ENCODE measurements at regions of chr3 and their contacts with region 1.

Region 1: DNA sequence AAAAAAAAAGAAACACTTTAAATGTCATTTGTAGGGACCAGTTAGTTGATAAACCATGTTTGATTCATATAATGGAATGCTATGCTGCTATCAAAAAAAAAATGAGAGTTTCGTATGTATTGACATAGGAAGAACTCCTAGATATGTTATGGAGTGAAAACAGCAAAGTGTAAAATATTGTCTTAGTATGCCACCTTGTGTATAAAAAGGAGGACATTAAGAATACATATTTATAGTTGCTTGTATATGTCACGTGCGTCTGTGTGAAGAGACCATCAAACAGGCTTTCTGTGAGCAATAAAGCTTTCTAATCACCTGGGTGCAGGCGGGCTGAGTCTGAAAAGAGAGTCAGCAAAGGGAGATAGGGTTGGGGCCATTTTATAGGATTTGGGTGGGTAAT is 39.5 kb downstream of the KBTBD8 start:
- DNase-seq: no peak
- ATAC-seq: no peak
- H3K4me3 ChIP-seq: no peak overlapping the region
- H3K27ac ChIP-seq: no peak overlapping the region
- H3K4me1 ChIP-seq: no peaks in the 10 kb centered on the region
- H3K27me3 ChIP-seq: no peaks in the 10 kb centered on the region; a peak in 1 of 5 replicates
- CTCF ChIP-seq: no peak
- EP300 ChIP-seq: no peak
- POLR2A ChIP-seq: no peak
- RAD21 ChIP-seq: no peak

Region 2: DNA sequence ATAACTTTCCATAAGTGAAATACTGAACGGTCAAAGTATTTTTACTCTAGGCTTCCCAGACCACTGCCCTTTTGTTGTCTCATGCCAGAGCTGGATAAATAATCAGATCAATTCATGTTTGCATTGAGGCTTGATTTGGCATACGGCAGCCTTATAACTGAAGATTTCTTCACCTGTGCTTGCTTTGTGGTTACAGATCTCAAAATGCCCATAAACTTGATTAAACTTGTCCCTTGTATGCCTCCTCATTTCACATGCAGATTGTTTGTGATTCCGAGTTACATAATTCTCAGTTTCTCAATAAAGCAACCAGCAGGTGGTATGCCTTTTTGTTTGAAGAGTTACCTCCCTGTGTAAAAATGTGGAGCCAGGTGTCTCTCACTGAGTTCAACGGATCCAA is 325.4 kb before region 1 on chr3:
- CTCF ChIA-PET with region 1: no interaction called
- POLR2A ChIA-PET with region 1: no interaction called
- in situ Hi-C with region 1: no loop called
- intact Hi-C with region 1: no loop called
- DNase-seq: no peak
- ATAC-seq: no peak
- H3K4me3 ChIP-seq: no peak overlapping the region
- H3K27ac ChIP-seq: no peak overlapping the region
- H3K4me1 ChIP-seq: no peaks in the 10 kb centered on the region
- H3K27me3 ChIP-seq: no peaks in the 10 kb centered on the region
- CTCF ChIP-seq: no peak
- EP300 ChIP-seq: no peak
- POLR2A ChIP-seq: no peak
- RAD21 ChIP-seq: no peak

Region 3: DNA sequence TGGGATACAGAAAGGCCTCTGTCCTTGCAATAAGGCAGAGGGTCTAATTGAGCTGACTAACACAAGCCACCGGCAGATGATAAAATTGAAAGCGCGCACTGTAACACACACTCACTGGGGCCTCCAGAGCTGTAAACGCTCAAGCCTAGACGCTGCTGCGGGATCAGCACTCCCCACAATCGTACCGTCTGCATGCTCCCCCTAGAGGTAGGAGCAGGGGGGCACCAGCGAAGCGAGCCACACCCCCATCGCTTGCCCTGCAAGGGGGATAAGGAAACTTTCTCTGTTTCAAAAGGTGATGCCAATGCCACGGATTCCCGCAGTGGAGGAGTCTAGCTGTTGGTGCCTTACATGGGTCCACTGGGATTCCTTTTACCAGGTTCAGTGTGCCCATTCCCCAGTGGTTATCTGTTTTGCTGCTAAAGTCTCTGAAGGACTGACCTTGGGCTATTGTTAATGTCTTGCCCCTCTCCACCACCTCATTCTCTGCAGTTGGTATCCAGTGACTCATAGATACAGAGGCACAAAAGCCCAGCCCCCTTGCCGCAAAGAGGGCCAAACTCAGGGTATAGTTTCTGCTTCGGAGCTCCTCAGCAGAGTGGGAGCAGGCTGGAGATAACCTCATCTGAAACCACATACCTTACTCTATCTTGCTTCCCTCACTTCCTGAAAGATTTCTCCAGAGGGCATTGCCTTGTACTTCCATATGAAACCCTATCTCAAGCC is 178.8 kb before region 1 on chr3:
- CTCF ChIA-PET with region 1: no interaction called
- POLR2A ChIA-PET with region 1: no interaction called
- in situ Hi-C with region 1: no loop called
- intact Hi-C with region 1: no loop called
- DNase-seq: no peak
- ATAC-seq: peak; percentile 85
- H3K4me3 ChIP-seq: no peak overlapping the region
- H3K27ac ChIP-seq: no peak overlapping the region
- H3K4me1 ChIP-seq: no peaks in the 10 kb centered on the region
- H3K27me3 ChIP-seq: peaks cover 0 to 4% of the 10 kb centered on the region in 2 experiments; a peak in 1 of 5 replicates
- CTCF ChIP-seq: peak; percentile 50
- EP300 ChIP-seq: no peak
- POLR2A ChIP-seq: no peak
- RAD21 ChIP-seq: no peak

Region 4: GRCh38 chr3:66938338-66938963 is 99.2 kb before region 1 on chr3:
- CTCF ChIA-PET with region 1: no interaction called
- POLR2A ChIA-PET with region 1: no interaction called
- in situ Hi-C with region 1: no loop called
- intact Hi-C with region 1: loop called (anchors 1 kb)
- DNase-seq: peak; percentile 43
- ATAC-seq: peak; percentile 88
- H3K4me3 ChIP-seq: no peak overlapping the region
- H3K27ac ChIP-seq: no peak overlapping the region
- H3K4me1 ChIP-seq: no peaks in the 10 kb centered on the region
- H3K27me3 ChIP-seq: no peaks in the 10 kb centered on the region; a peak in 1 of 5 replicates
- CTCF ChIP-seq: peak; percentile 79
- EP300 ChIP-seq: no peak
- POLR2A ChIP-seq: no peak
- RAD21 ChIP-seq: peak; percentile 44; the same call in 1 of the 2 replicates

Region 5: DNA sequence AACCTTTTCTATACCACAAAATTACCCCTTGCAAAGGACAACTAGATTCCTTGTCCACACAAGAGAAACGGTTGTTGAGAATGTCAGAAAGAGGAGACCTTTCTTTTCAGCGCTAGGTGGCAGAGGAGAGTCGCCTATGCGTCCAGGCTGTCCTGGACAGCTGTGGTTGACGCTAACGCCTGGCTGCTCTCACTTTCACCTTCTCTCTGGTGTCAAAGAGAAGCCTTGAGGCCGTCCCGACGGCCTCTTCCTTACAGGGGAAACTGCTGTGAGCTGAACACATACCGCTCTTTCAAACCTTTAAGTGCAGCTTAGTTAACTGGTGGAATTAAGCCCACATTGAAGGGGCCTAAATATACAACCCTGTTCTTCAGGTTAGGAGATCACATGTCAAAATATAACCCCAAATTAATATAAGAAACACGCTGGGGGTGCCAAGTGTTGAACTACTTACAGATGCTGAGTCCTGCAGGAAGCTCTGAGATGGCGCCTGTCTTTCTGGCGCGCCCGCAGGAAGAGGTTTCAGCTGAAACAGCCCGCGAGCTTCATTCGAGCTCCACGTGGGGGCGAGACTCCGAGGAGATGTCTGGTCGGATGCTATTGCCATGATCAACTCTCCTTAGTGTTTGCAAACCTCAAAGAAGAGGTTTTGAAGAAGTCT is 65.6 kb before region 1 on chr3:
- CTCF ChIA-PET with region 1: no interaction called
- POLR2A ChIA-PET with region 1: no interaction called
- in situ Hi-C with region 1: no loop called
- intact Hi-C with region 1: loop called (anchors 1 kb)
- DNase-seq: peak; percentile 60
- ATAC-seq: peak; percentile 100
- H3K4me3 ChIP-seq: peak overlapping the region; percentile 26 to 64 (median 27); a peak in 3 of 6 replicates
- H3K27ac ChIP-seq: no peak overlapping the region
- H3K4me1 ChIP-seq: peaks cover 8% of the 10 kb centered on the region; the same call in 1 of the 2 replicates
- H3K27me3 ChIP-seq: peaks cover 0 to 12% of the 10 kb centered on the region in 2 experiments; a peak in 3 of 5 replicates
- CTCF ChIP-seq: peak; percentile 87
- EP300 ChIP-seq: no peak
- POLR2A ChIP-seq: no peak
- RAD21 ChIP-seq: peak; percentile 57; the same call in 1 of the 2 replicates

Region 6: DNA sequence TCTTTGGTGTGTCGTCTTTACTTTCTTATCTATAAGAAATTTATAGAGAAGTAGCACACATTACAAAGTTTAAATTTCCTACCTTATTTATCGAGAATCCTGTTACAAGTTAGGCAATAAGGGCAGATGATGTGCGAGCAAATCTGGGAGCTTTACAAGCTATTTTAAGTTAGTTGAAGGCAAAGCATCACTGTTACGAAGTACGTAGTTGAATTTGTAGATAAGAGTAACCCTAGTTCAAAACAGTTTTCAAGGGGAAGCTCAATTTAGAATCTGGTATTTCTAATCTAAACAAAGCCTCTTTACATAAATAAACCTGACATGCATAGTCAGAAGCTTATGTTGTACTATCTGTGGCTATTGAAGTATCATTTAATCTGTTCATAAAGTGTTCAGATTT is 31.2 kb before region 1 on chr3:
- CTCF ChIA-PET with region 1: no interaction called
- POLR2A ChIA-PET with region 1: no interaction called
- in situ Hi-C with region 1: no loop called
- intact Hi-C with region 1: no loop called
- DNase-seq: no peak
- ATAC-seq: no peak
- H3K4me3 ChIP-seq: no peak overlapping the region
- H3K27ac ChIP-seq: no peak overlapping the region
- H3K4me1 ChIP-seq: no peaks in the 10 kb centered on the region
- H3K27me3 ChIP-seq: no peaks in the 10 kb centered on the region
- CTCF ChIP-seq: no peak
- EP300 ChIP-seq: no peak
- POLR2A ChIP-seq: no peak
- RAD21 ChIP-seq: no peak

Region 7: DNA sequence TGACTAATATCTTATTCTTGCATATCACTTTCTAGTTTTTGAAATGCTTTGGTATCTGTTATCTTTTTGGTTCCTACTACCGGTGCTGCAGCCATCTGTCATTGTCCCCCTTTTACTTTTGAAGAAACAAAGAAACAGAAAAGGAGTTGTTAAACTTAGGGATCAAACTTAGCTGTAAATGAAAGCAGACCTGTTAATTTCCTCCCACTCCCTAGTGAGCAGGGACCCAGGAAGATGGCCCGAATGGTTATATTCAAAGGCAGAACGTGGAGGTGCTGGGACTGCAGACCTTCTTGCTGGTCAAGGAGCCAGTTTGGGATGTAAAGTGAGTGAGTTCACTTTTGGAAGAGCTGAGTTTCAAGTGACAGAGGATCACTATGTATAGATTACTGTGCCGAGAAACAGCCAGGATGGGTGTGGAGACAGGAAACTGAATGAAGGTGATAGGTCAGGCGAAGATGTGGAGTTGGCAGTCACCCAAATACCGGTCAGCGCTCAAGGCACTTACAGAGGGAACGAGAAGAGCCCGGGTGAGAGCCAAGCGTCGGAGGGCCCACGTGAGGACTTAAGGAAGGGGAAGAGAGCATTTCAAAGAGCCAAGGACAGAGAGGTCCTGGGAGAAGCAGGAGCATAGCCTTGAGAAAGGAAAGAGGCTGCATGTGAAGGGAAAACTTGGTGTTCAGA is 19.4 kb before region 1 on chr3:
- CTCF ChIA-PET with region 1: no interaction called
- POLR2A ChIA-PET with region 1: no interaction called
- in situ Hi-C with region 1: no loop called
- intact Hi-C with region 1: no loop called
- DNase-seq: no peak
- ATAC-seq: peak; percentile 54; the same call in 1 of the 3 replicates
- H3K4me3 ChIP-seq: peak overlapping the region in 1 of 3 experiments; percentile 23; a peak in 2 of 6 replicates
- H3K27ac ChIP-seq: no peak overlapping the region
- H3K4me1 ChIP-seq: peaks cover 21% of the 10 kb centered on the region
- H3K27me3 ChIP-seq: peaks cover 1 to 11% of the 10 kb centered on the region in 2 experiments; a peak in 4 of 5 replicates
- CTCF ChIP-seq: no peak
- EP300 ChIP-seq: no peak
- POLR2A ChIP-seq: no peak
- RAD21 ChIP-seq: no peak